Cardiac septum (tissue), 1 donor: ENCODE measurements at regions of chr9 and their contacts with region 1.

Region 1: GRCh38 chr9:98998441-98999151 is 54.9 kb downstream of the COL15A1 start:
- DNase-seq: peak; percentile 91

Region 2: DNA sequence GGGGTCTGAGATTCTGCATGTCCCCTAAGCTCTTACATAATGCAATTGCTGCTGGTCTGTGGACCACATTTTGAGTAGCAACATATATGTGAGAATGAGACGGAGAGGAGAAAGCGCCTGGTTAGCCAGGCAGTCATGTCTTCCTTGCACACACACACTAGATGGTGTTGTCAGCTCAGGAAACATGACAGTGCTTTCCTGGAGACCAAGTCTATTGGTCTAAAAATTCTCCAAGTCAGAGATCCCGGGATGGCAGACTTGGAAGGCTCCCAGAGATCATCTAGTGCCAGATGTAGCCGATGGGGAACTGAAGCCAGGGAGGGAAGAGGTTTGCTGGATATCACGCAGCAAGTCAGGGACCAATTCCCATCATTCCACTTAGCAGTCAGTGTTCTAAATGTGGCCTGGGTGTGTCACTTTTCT is 137.7 kb before region 1 on chr9:
- intact Hi-C with region 1: loop called (anchors 1 kb)
- DNase-seq: peak; percentile 89

Region 3: GRCh38 chr9:98916660-98917059 is 81.9 kb before region 1 on chr9:
- intact Hi-C with region 1: loop called (anchors 2 kb)
- DNase-seq: peak; percentile 88

Region 4: GRCh38 chr9:98974994-98975712 is 23.4 kb before region 1 on chr9:
- intact Hi-C with region 1: loop called (anchors 2 kb)
- DNase-seq: peak; percentile 95

Region 5: DNA sequence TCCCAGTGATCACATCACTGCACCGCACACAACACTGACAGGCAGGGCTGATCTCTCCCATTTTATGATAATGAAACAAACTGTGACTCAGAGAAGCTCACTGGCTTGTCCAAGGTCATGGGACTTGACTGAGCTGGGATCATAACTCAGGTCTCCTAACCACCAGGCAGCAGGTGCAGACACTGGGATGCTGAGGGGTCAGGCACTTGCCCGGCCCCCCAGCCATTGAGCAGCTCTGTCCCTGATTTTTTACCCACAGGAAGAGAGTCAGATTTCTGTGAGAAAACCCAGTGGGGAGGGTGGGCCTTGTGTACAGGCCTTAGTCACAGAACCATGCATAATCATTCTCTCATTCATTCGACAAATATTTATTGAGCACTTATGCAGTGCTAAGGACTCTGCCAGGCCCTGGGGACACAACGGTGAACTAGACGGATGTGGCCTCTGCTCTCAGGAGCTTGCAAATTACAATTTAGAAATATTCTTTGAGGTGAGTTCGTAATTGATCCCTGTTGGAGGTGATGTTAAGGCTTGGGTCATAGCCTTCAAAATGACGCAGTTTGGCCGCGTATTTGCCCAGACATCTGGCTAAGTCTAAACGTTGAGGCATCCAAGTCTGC is 51.8 kb after region 1 on chr9:
- intact Hi-C with region 1: no loop called
- DNase-seq: no peak

Region 6: GRCh38 chr9:99140685-99141314 is 142.2 kb after region 1 on chr9:
- intact Hi-C with region 1: loop called (anchors 5 kb)
- DNase-seq: no peak

Region 7: GRCh38 chr9:99286536-99286935 is 287.9 kb after region 1 on chr9:
- intact Hi-C with region 1: no loop called
- DNase-seq: no peak

Region 8: GRCh38 chr9:99607842-99608448 is 609.3 kb after region 1 on chr9:
- intact Hi-C with region 1: no loop called
- DNase-seq: no peak